GM18951 (cell line): ENCODE measurements at regions of chr17 and their contacts with region 1.

Region 1: GRCh38 chr17:32609085-32609484 is 122.3 kb downstream of the CDK5R1 start:
- POLR2A ChIP-seq: no peak

Region 2: GRCh38 chr17:32479074-32479617 is 129.9 kb before region 1 on chr17:
- in situ Hi-C with region 1: loop called (anchors 5 kb)
- POLR2A ChIP-seq: no peak

Region 3: DNA sequence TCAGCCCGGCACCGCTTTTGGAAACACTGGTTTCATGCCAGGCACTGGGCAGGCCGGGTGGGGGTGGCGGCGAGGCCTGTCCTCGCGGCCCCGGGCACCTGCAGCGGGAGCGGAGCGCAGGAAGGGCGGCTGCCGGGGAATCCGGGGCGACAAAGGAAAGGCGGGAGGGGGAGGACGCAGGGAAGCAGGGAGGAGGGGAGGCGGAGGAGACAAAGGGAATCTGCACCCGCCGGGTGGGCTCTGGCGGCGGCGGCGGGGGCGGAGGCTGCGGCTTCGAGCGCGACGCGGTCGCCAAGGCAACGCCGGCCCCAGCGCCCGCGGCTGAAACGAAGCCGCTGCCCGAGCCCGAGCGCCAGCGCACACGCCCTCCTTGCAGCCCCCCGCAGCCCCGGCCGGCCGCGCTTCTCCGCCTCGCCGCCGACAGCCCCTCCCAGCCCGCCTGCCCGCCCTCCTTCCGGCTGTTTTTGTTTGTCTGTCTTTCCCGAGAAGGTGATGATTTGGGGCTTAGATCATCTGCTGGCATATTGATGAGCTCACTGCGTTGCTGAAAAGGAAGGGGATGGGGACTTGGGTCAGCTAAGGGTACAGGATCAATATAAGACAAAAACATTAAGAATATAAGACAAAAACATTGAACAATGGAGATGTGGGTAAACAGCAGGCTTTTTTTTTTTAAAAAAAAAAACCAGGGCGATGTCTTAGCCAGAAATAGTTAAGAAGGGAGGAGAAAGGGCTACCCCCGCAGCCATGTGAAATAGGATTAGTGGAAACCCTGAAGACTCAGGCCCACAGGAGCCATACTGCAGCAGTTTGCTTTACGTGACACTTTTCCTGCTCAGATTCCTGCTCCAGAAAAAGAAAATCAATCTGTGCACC is 89.6 kb before region 1 on chr17:
- in situ Hi-C with region 1: loop called (anchors 10 kb)
- POLR2A ChIP-seq: peak; percentile 19

Region 4: DNA sequence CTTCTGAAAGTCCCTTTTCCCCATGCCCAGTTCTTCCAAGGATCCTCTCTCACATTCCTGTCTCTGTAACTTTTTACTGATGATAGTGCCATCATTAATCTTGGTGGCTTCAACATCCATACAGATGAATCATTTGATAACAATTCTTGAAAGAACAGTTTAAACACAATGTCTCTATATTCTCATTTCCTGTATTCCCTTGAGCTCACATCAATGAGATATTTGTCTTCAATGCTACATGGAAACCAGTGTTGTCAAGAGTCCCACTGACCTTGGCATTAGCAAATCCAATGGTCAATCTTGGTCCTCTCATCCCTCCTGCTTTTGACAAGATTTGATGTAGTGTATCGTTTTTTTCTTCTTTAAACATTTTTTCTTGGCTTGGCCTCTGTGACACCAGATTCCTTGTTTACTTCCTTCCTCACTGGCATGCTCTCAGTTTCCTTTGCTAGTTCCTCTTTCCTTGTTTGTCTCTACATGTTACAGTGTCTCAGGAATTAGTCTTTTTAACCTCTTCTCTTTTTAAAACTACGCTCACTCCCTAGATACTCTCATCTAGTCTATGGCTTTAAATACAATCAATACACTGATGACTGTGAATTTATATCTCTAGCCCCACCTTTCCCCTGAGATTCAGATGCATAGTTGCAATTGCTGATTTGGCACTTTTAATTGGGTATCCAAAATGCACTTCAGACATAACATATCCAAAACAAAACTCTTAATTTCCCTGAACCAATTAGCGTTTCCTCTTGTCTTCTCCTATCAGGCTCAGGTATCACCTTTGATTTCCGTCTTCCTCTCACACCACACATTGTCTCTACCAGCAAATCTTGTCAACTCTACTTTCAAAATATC is 133.8 kb after region 1 on chr17:
- in situ Hi-C with region 1: no loop called
- POLR2A ChIP-seq: no peak